PC-9 (cell line): ENCODE measurements at regions of chr9 and their contacts with region 1.

Region 1: DNA sequence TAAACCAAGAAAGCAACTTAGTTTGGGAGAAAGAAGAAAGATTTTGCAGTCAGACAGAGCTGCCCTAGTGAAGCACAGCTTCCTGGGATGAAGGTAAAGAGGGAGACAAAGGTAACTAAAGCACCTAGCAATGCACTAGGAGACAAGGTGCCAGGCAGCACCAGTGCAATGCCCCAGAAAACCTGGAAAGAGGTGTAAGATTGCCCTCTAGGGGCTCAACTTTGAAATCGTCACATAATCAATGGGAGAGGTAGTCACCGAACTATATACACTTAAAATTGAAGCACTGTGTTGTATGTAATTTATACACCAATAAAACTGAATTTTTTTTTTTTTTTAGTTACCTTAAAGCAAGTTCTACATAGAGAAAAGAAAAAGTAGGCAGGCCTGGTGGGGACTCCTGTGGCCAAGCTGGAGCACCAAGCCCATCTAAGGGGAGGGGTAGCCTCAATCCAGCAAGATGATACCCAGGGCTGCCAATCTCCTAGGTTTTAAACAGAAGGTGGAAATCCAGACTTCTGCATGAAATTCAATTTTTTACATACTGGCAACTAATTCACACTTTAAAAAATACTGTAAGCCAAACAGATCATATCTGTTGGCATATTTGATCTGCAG is 48.2 kb downstream of the CDK5RAP2 start:
- DNase-seq: peak in 1 of 2 experiments; percentile 12
- H3K4me3 ChIP-seq: no peak overlapping the region
- H3K27ac ChIP-seq: no peak overlapping the region
- H3K4me1 ChIP-seq: peaks cover 15% of the 10 kb centered on the region
- H3K27me3 ChIP-seq: no peaks in the 10 kb centered on the region
- CTCF ChIP-seq: peak; percentile 65

Region 2: GRCh38 chr9:118957585-118957984 is 1574.2 kb before region 1 on chr9:
- CTCF ChIA-PET with region 1: interaction called, 11 read pairs
- POLR2A ChIA-PET with region 1: no interaction called
- intact Hi-C with region 1: no loop called
- DNase-seq: no peak
- H3K4me3 ChIP-seq: no peak overlapping the region
- H3K27ac ChIP-seq: no peak overlapping the region
- H3K4me1 ChIP-seq: no peaks in the 10 kb centered on the region
- H3K27me3 ChIP-seq: no peaks in the 10 kb centered on the region
- CTCF ChIP-seq: no peak

Region 3: GRCh38 chr9:120161736-120162135 is 370.1 kb before region 1 on chr9:
- CTCF ChIA-PET with region 1: no interaction called
- POLR2A ChIA-PET with region 1: no interaction called
- intact Hi-C with region 1: no loop called
- DNase-seq: no peak
- H3K4me3 ChIP-seq: no peak overlapping the region
- H3K27ac ChIP-seq: no peak overlapping the region
- H3K4me1 ChIP-seq: no peaks in the 10 kb centered on the region
- H3K27me3 ChIP-seq: peaks cover 34% of the 10 kb centered on the region
- CTCF ChIP-seq: no peak

Region 4: DNA sequence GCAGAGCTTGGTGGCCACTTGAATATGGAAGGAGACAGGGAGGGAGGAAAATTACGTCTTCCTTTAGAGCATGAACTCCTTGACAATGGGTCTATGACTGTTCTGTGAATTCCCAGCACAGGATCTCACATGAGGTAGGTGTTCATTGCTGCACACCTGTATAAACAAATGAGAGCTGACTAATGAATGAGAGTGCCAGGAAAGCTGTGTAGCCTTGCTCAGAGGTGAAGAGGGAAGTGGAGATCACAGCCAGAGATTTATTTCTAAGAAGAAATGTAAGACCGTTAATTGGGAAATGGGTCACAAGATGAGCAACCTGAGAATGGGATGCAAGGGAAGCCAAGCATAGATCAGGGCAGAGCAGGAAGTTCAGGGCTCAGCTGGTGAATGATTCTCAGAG is 247.0 kb before region 1 on chr9:
- CTCF ChIA-PET with region 1: no interaction called
- POLR2A ChIA-PET with region 1: no interaction called
- intact Hi-C with region 1: no loop called
- DNase-seq: no peak
- H3K4me3 ChIP-seq: no peak overlapping the region
- H3K27ac ChIP-seq: no peak overlapping the region
- H3K4me1 ChIP-seq: no peaks in the 10 kb centered on the region
- H3K27me3 ChIP-seq: peaks cover 6% of the 10 kb centered on the region; the same call in 1 of the 2 replicates
- CTCF ChIP-seq: no peak

Region 5: DNA sequence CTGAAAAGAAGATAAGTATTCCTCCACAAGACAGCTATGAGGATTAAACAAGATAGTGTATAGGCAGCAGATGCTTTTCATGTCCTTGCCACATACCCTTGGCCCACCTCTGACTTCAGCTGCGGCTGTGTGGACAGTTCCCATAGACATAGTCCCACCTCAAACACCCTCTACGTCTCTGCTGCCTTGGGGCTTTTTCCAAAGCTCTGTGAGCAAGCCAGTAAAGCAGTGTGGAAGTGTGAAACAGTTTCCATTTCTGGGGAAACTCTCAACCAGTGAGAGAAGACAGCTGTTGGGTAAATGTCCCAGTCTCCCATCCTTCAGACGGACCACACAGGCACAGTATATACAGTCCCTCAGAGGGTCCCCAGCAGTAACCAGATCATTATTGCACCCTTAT is 77.3 kb before region 1 on chr9:
- CTCF ChIA-PET with region 1: no interaction called
- POLR2A ChIA-PET with region 1: interaction called, 11 read pairs
- intact Hi-C with region 1: no loop called
- DNase-seq: no peak
- H3K4me3 ChIP-seq: no peak overlapping the region
- H3K27ac ChIP-seq: no peak overlapping the region
- H3K4me1 ChIP-seq: no peaks in the 10 kb centered on the region
- H3K27me3 ChIP-seq: no peaks in the 10 kb centered on the region
- CTCF ChIP-seq: no peak

Region 6: DNA sequence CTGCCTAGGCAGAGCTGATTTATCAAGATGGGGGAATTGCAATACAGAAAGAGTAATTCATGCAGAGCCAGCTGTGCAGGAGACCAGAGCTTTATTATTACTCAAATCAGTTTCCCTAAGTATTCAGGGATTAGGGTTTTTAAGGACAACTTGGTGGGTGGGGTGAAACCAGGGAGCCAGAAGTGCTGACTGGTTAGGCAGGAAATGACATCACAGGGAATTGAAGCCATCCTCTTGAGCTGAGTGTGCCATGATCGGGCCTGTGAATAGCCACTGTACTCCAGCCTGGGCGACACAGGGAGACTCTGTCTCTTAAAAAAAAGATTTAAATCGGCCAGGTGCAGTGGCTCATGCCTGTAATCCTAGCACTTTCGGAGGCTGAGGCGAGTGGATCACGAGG is 93.4 kb after region 1 on chr9:
- CTCF ChIA-PET with region 1: no interaction called
- POLR2A ChIA-PET with region 1: interaction called, 27 read pairs
- intact Hi-C with region 1: no loop called
- DNase-seq: no peak
- H3K4me3 ChIP-seq: no peak overlapping the region
- H3K27ac ChIP-seq: no peak overlapping the region
- H3K4me1 ChIP-seq: peaks cover 15% of the 10 kb centered on the region
- H3K27me3 ChIP-seq: no peaks in the 10 kb centered on the region
- CTCF ChIP-seq: no peak